ENCODE measurements at regions of chr17 and their contacts with region 1.

Region 1: GRCh38 chr17:17919169-17920107 is 52.8 kb downstream of the TOM1L2 start:
- DNase-seq: peak; percentile 84
- H3K4me3 Mint-ChIP-seq: no peak overlapping the region
- H3K27ac Mint-ChIP-seq: no peak overlapping the region
- H3K4me1 Mint-ChIP-seq: peaks cover 29% of the 10 kb centered on the region
- H3K27me3 Mint-ChIP-seq: no peaks in the 10 kb centered on the region
- CTCF ChIP-seq: peak; percentile 73

Region 2: GRCh38 chr17:17812211-17813057 is 107.0 kb before region 1 on chr17:
- CTCF ChIA-PET with region 1: interaction called, 10 read pairs
- POLR2A ChIA-PET with region 1: interaction called, 3 read pairs
- intact Hi-C with region 1: loop called (anchors 1 kb)
- DNase-seq: peak; percentile 62
- H3K4me3 Mint-ChIP-seq: no peak overlapping the region
- H3K27ac Mint-ChIP-seq: no peak overlapping the region
- H3K4me1 Mint-ChIP-seq: peaks cover 5% of the 10 kb centered on the region
- H3K27me3 Mint-ChIP-seq: no peaks in the 10 kb centered on the region
- CTCF ChIP-seq: peak; percentile 98

Region 3: GRCh38 chr17:17884391-17885357 is 34.8 kb before region 1 on chr17:
- CTCF ChIA-PET with region 1: interaction called, 48 read pairs
- POLR2A ChIA-PET with region 1: interaction called, 4 read pairs
- intact Hi-C with region 1: no loop called
- DNase-seq: no peak
- H3K4me3 Mint-ChIP-seq: no peak overlapping the region
- H3K27ac Mint-ChIP-seq: no peak overlapping the region
- H3K4me1 Mint-ChIP-seq: no peaks in the 10 kb centered on the region
- H3K27me3 Mint-ChIP-seq: no peaks in the 10 kb centered on the region
- CTCF ChIP-seq: no peak

Region 4: GRCh38 chr17:17900615-17901520 is 18.6 kb before region 1 on chr17:
- CTCF ChIA-PET with region 1: interaction called, 48 read pairs
- POLR2A ChIA-PET with region 1: interaction called, 17 read pairs
- intact Hi-C with region 1: no loop called
- DNase-seq: peak; percentile 96
- H3K4me3 Mint-ChIP-seq: peak overlapping the region; percentile 12
- H3K27ac Mint-ChIP-seq: no peak overlapping the region
- H3K4me1 Mint-ChIP-seq: peaks cover 13% of the 10 kb centered on the region
- H3K27me3 Mint-ChIP-seq: no peaks in the 10 kb centered on the region
- CTCF ChIP-seq: no peak

Region 5: GRCh38 chr17:17972126-17972951 is 52.9 kb after region 1 on chr17 and contains the starts of genes DRC3 and TOM1L2:
- CTCF ChIA-PET with region 1: interaction called, 5 read pairs
- POLR2A ChIA-PET with region 1: interaction called, 9 read pairs
- intact Hi-C with region 1: loop called (anchors 2 kb)
- DNase-seq: peak; percentile 100
- H3K4me3 Mint-ChIP-seq: peak within 1 kb of the TSS; percentile 90
- H3K27ac Mint-ChIP-seq: peak within 1 kb of the TSS; percentile 98
- H3K4me1 Mint-ChIP-seq: peaks cover 14% of the 10 kb centered on the region
- H3K27me3 Mint-ChIP-seq: no peaks in the 10 kb centered on the region
- CTCF ChIP-seq: no peak
- total RNA-seq, gene DRC3: 2.3 and 3.1 TPM in 2 replicates
- total RNA-seq, gene TOM1L2: 34.2 and 44.3 TPM in 2 replicates

Region 6: GRCh38 chr17:18006495-18007239 is 87.2 kb after region 1 on chr17:
- CTCF ChIA-PET with region 1: no interaction called
- POLR2A ChIA-PET with region 1: no interaction called
- intact Hi-C with region 1: no loop called
- DNase-seq: no peak
- H3K4me3 Mint-ChIP-seq: no peak overlapping the region
- H3K27ac Mint-ChIP-seq: no peak overlapping the region
- H3K4me1 Mint-ChIP-seq: no peaks in the 10 kb centered on the region
- H3K27me3 Mint-ChIP-seq: no peaks in the 10 kb centered on the region
- CTCF ChIP-seq: no peak

Region 7: DNA sequence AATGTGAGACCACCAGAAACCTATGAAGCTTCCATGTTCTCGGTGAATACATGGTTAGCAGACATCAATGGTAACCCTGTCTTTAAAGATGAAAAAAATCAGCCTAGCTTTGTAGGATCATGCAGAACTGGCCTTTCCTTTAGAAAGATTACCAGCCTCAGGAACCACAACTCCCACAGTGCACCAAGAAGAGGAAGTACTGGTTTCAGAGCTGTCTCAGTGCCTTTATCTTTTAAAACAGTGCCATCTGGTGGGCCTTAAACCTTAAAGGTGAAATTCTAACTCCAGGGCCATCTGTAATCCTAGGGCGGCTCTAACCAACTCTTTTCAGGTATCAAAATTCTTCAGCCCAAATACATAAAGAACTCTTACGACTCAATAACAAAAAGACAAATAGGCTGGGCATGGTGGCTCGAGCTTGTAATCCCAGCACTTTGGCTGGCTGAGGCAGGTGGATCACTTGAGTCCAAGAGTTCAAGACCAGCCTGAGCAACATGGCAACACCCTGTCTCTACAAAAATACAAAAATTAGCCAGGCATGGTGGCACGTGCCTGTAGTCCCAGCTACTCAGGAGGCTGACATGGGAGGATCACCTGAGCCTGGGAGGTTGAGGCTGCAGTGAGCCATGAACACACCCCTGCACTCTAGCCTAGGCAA is 114.1 kb after region 1 on chr17:
- CTCF ChIA-PET with region 1: interaction called, 30 read pairs
- POLR2A ChIA-PET with region 1: interaction called, 9 read pairs
- intact Hi-C with region 1: loop called (anchors 1 kb)
- DNase-seq: peak; percentile 86
- H3K4me3 Mint-ChIP-seq: no peak overlapping the region
- H3K27ac Mint-ChIP-seq: no peak overlapping the region
- H3K4me1 Mint-ChIP-seq: peaks cover 13% of the 10 kb centered on the region
- H3K27me3 Mint-ChIP-seq: no peaks in the 10 kb centered on the region
- CTCF ChIP-seq: peak; percentile 59

Measured in MCF 10A (cell line).